Keratinocyte (primary cell): ENCODE measurements at regions of chr4 and their contacts with region 1.

Region 1: DNA sequence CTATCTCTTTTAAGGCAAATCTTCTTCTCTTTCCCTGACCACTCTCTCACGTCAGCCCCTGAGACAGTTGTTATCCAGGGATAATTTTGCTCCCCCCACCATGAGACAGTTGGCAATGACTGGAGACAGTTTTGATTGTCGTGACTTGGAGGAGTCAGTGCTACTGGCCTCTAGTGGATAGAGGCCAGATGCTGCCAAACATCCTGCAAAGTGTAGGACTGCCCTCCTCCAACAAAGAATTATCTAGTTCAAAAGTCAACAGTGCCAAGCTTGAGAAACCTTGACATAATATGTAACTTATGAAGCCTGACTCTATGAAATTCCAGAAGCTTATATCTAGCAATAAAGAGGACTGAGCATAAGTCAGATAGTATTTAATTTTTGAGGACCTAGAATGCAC is 502.1 kb upstream of the IGFBP7 start:
- DNase-seq: no peak
- H3K4me3 ChIP-seq: no peak overlapping the region
- H3K27ac ChIP-seq: no peak overlapping the region
- H3K4me1 ChIP-seq: no peaks in the 10 kb centered on the region
- H3K27me3 ChIP-seq: no peaks in the 10 kb centered on the region
- CTCF ChIP-seq: peak in 2 of 3 experiments; percentile 16 to 22

Region 2: GRCh38 chr4:57462843-57463242 is 149.4 kb before region 1 on chr4:
- dilution Hi-C with region 1: loop called (anchors 25 kb)
- DNase-seq: no peak
- H3K4me3 ChIP-seq: no peak overlapping the region
- H3K27ac ChIP-seq: no peak overlapping the region
- H3K4me1 ChIP-seq: no peaks in the 10 kb centered on the region
- H3K27me3 ChIP-seq: no peaks in the 10 kb centered on the region
- CTCF ChIP-seq: no peak